ENCODE measurements at regions of chr4 and their contacts with region 1.

Region 1: GRCh38 chr4:125314676-125315575 is at the start of gene FAT4:
- DNase-seq: peak; percentile 91
- H3K4me3 ChIP-seq: peak within 1 kb of the TSS; percentile 55 to 82 (median 63)
- H3K27ac ChIP-seq: peak within 1 kb of the TSS; percentile 69 to 92 (median 86)
- H3K4me1 ChIP-seq: peaks cover 4 to 56% (median 28%) of the 10 kb centered on the region in 6 donors
- H3K27me3 ChIP-seq: peaks cover 0 to 67% (median 30%) of the 10 kb centered on the region in 7 donors
- CTCF ChIP-seq: peak in 3 of 11 experiments; percentile 6 to 17 (median 14)
- POLR2A ChIP-seq: peak in 2 of 3 donors; percentile 16 to 59
- total RNA-seq, gene FAT4: 11.2 to 41.2 (median 26.6) TPM

Region 2: DNA sequence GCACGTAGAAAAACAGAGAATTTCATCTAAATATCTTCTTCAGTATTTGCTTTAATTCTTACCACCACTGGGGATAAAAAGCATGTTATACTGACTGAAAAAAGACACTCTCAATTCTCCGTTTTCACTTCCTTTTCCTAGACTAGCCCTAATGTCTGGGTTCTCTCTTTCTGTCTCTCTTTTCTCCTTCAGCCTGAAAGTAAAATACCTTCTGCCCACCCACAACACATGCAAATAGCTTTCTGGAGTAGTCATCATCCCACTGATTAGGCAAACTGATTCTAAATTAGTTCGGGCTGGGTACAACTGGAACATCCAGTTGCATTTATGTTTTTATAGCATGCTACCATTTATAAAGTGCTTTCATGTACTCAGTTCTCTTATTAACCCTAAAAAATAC is 460.0 kb before region 1 on chr4:
- intact Hi-C with region 1: no loop called
- DNase-seq: no peak
- H3K4me3 ChIP-seq: no peak overlapping the region
- H3K27ac ChIP-seq: no peak overlapping the region
- H3K4me1 ChIP-seq: no peaks in the 10 kb centered on the region
- H3K27me3 ChIP-seq: no peaks in the 10 kb centered on the region
- CTCF ChIP-seq: no peak
- POLR2A ChIP-seq: no peak

Region 3: GRCh38 chr4:125750828-125751466 is 436.0 kb after region 1 on chr4:
- intact Hi-C with region 1: loop called (anchors 5 kb)
- DNase-seq: no peak
- H3K4me3 ChIP-seq: no peak overlapping the region
- H3K27ac ChIP-seq: no peak overlapping the region
- H3K4me1 ChIP-seq: no peaks in the 10 kb centered on the region
- H3K27me3 ChIP-seq: no peaks in the 10 kb centered on the region
- CTCF ChIP-seq: peak in 6 of 11 experiments; percentile 24 to 54 (median 30)
- POLR2A ChIP-seq: no peak

Measured in spleen (tissue), 13 donors.